ENCODE measurements at regions of chr14 and their contacts with region 1.

Region 1: DNA sequence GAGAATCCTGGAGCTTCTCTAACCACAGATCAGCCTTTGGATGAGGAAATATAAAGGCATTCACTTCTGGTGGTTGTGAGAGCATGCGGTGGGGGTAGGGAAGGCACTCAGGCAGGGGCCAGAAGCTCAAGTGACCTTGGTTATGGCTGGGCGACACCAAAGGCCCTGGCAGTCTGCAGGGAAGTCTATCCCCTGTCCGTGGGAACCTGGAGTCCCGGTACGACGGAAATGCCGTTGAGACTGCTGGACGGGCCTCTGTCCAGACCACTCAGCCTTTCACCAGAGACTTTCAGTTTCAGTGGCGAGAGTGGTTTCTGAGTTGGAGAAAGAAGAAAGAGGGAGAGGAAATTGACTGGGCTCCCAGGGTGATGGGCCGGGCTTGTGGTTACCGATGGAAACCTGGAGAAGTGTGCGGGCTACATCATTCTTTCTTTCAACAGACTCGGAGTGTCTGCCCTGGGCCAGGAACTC is 20.9 kb downstream of the ISCA2 start:
- DNase-seq: peak in 2 of 3 donors; percentile 24 to 52
- ATAC-seq: peak in 3 of 4 donors; percentile 20 to 46 (median 40)
- H3K4me3 ChIP-seq: no peak overlapping the region
- H3K27ac ChIP-seq: no peak overlapping the region
- H3K4me1 ChIP-seq: no peaks in the 10 kb centered on the region
- H3K27me3 ChIP-seq: no peaks in the 10 kb centered on the region
- CTCF ChIP-seq: no peak
- POLR2A ChIP-seq: no peak

Region 2: GRCh38 chr14:74583689-74584434 is 69.4 kb after region 1 on chr14:
- intact Hi-C with region 1: no loop called
- DNase-seq: peak in 1 of 3 donors; percentile 13
- ATAC-seq: no peak
- H3K4me3 ChIP-seq: no peak overlapping the region
- H3K27ac ChIP-seq: no peak overlapping the region
- H3K4me1 ChIP-seq: no peaks in the 10 kb centered on the region
- H3K27me3 ChIP-seq: no peaks in the 10 kb centered on the region
- CTCF ChIP-seq: no peak
- POLR2A ChIP-seq: no peak

Region 3: DNA sequence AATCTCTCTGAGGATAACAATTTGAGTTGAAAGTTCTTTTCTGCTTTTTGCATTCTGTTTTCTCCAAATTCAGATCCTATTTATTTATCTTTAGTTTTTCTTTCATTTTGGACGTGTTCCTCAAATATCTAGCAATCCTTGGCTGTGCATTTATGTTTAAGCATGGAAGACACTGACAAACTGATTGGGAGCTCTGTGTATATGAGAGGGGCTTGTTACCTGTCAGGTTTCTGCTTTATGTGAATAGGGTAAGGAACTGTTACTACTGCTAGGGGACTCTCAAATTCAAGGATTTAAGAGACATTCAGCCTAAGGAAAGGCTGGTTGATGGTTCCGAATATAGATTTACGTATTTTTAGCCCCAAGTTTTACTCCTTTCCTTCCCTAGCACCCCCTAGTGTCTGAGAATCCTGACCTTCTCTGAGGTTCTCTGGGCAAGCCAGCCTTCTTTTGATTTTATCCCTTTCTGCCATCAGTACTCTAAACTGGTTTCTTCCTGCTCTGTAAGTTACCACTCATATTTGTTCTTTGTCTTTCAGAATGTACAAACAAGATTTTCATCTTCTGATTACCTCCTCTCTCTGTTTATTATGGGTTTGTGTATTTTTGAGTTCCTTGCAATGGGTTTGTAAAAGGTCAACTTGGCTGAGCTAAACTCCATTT is 279.1 kb after region 1 on chr14:
- intact Hi-C with region 1: loop called in 1 of 2 experiments (anchors 10 kb)
- DNase-seq: no peak
- ATAC-seq: no peak
- H3K4me3 ChIP-seq: no peak overlapping the region
- H3K27ac ChIP-seq: peak overlapping the region in 1 of 3 donors; percentile 25
- H3K4me1 ChIP-seq: peaks cover 0 to 4% (median 0%) of the 10 kb centered on the region in 4 donors
- H3K27me3 ChIP-seq: no peaks in the 10 kb centered on the region
- CTCF ChIP-seq: peak in 1 of 4 donors; percentile 24
- POLR2A ChIP-seq: no peak

Region 4: GRCh38 chr14:75011356-75011994 is 497.0 kb after region 1 on chr14:
- intact Hi-C with region 1: no loop called
- DNase-seq: no peak
- ATAC-seq: peak in 1 of 4 donors; percentile 31
- H3K4me3 ChIP-seq: no peak overlapping the region
- H3K27ac ChIP-seq: peak overlapping the region in 1 of 3 donors; percentile 20
- H3K4me1 ChIP-seq: peaks cover 0 to 5% (median 0%) of the 10 kb centered on the region in 4 donors
- H3K27me3 ChIP-seq: no peaks in the 10 kb centered on the region
- CTCF ChIP-seq: no peak
- POLR2A ChIP-seq: no peak